Gastrocnemius medialis (tissue), 4 donors: ENCODE measurements at regions of chr3 and their contacts with region 1.

Region 1: GRCh38 chr3:149473357-149474249 is 894 bp upstream of the TM4SF4 start:
- DNase-seq: peak; percentile 83 to 86
- ATAC-seq: peak; percentile 97 to 98
- H3K4me3 ChIP-seq: no peak overlapping the region
- H3K27ac ChIP-seq: peak overlapping the region; percentile 35 to 79 (median 69)
- H3K4me1 ChIP-seq: peaks cover 19 to 21% of the 10 kb centered on the region in 2 donors
- H3K27me3 ChIP-seq: no peaks in the 10 kb centered on the region
- CTCF ChIP-seq: no peak
- POLR2A ChIP-seq: no peak

Region 2: GRCh38 chr3:149393345-149394160 is 80.0 kb before region 1 on chr3:
- in situ Hi-C with region 1: loop called in 3 of 4 experiments (anchors 5 to 25 kb)
- intact Hi-C with region 1: no loop called
- DNase-seq: peak in 1 of 2 donors; percentile 54
- ATAC-seq: peak; percentile 64 to 81
- H3K4me3 ChIP-seq: no peak overlapping the region
- H3K27ac ChIP-seq: peak overlapping the region in 1 of 4 donors; percentile 1
- H3K4me1 ChIP-seq: peaks cover 3 to 12% of the 10 kb centered on the region in 2 donors
- H3K27me3 ChIP-seq: no peaks in the 10 kb centered on the region
- CTCF ChIP-seq: peak; percentile 64 to 80 (median 76)
- POLR2A ChIP-seq: no peak

Region 3: GRCh38 chr3:149536429-149536828 is 62.8 kb after region 1 on chr3:
- in situ Hi-C with region 1: no loop called
- intact Hi-C with region 1: no loop called
- DNase-seq: peak in 1 of 2 donors; percentile 38
- ATAC-seq: peak in 1 of 2 donors; percentile 64
- H3K4me3 ChIP-seq: peak overlapping the region in 1 of 4 donors; percentile 25
- H3K27ac ChIP-seq: peak overlapping the region in 2 of 4 donors; percentile 4 to 17
- H3K4me1 ChIP-seq: peaks cover 25 to 26% of the 10 kb centered on the region in 2 donors
- H3K27me3 ChIP-seq: no peaks in the 10 kb centered on the region
- CTCF ChIP-seq: no peak
- POLR2A ChIP-seq: no peak